ENCODE measurements at regions of chr18 and their contacts with region 1.

Region 1: DNA sequence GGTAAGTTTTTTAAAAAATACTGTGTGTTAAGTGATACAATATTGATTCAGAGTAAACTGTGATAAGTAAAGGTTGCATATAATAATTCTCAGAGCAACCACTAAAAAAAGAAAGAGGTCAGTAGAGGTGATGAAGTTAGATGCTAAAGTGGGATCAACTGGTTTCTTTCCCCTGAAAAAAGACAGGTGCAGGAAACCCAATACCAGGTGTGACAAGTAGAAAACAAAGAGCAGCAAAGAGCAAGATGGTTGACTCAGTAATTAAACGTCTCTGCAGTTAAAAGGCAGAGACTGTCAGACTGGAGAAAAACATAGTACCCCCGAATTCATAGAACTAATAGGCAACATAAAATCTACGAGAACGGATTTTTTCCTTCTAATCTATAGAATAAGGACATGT is 128.3 kb downstream of the ATP9B start:
- DNase-seq: no peak
- ATAC-seq: no peak
- H3K4me3 ChIP-seq: no peak overlapping the region
- H3K27ac ChIP-seq: no peak overlapping the region
- H3K4me1 ChIP-seq: no peaks in the 10 kb centered on the region
- H3K27me3 ChIP-seq: no peaks in the 10 kb centered on the region
- CTCF ChIP-seq: no peak

Region 2: DNA sequence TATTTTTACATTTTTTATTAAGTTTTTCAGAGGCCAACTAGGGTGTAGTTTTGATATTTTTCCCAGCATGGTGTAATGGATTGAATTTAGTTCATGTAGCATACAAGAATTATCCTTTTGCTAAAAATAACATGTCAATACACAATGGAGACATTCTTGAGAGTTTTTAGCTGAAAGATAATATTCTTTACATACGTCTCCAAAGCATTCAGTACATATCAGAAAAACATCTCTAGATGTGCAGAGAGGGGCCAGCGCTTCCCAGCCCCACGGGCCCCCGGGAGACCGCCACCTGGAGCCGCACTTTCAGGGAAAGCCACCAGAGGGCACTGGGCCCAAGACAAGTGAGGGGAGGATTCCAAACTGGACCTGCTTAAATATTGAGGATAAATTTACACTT is 1448.4 kb before region 1 on chr18:
- CTCF ChIA-PET with region 1: interaction called, 14 read pairs
- POLR2A ChIA-PET with region 1: no interaction called
- in situ Hi-C with region 1: no loop called
- intact Hi-C with region 1: no loop called
- DNase-seq: no peak
- ATAC-seq: peak; percentile 67; the same call in 1 of the 2 replicates
- H3K4me3 ChIP-seq: no peak overlapping the region
- H3K27ac ChIP-seq: no peak overlapping the region
- H3K4me1 ChIP-seq: no peaks in the 10 kb centered on the region
- H3K27me3 ChIP-seq: peaks cover 13% of the 10 kb centered on the region
- CTCF ChIP-seq: peak; percentile 92

Region 3: DNA sequence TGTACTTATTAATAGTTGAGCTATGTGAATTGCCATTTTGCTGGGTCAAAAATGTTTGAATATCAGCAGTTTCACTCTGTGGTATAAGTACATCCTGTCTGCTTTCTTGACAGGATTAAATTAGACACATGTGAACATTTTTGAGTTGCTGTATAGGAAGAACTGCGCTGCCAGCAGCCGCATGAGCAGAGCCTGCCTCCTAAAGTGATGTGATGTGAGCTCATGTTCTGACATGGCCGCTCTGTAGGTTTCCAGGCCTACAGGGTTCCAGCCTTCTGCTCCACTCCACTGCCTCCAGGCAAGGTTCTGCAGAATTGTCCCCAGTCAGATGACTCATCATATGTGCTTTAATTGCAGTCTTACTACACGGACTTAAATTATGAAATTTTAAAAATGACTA is 78.5 kb after region 1 on chr18:
- CTCF ChIA-PET with region 1: no interaction called
- POLR2A ChIA-PET with region 1: no interaction called
- in situ Hi-C with region 1: no loop called
- intact Hi-C with region 1: no loop called
- DNase-seq: no peak
- ATAC-seq: no peak
- H3K4me3 ChIP-seq: no peak overlapping the region
- H3K27ac ChIP-seq: no peak overlapping the region
- H3K4me1 ChIP-seq: no peaks in the 10 kb centered on the region
- H3K27me3 ChIP-seq: no peaks in the 10 kb centered on the region
- CTCF ChIP-seq: no peak

Measured in Panc1 (cell line).